ENCODE measurements at regions of chr12 and their contacts with region 1.

Region 1: GRCh38 chr12:127677537-127678131 is 589.3 kb upstream of the TMEM132C start:
- DNase-seq: peak; percentile 81 to 87
- ATAC-seq: peak; percentile 83
- H3K4me3 ChIP-seq: no peak overlapping the region
- H3K27ac ChIP-seq: no peak overlapping the region
- H3K4me1 ChIP-seq: no peaks in the 10 kb centered on the region
- H3K27me3 ChIP-seq: no peaks in the 10 kb centered on the region

Region 2: GRCh38 chr12:127108360-127109215 is 569.0 kb before region 1 on chr12:
- intact Hi-C with region 1: loop called (anchors 5 kb)
- DNase-seq: peak in 1 of 2 donors; percentile 61
- ATAC-seq: peak; percentile 67
- H3K4me3 ChIP-seq: no peak overlapping the region
- H3K27ac ChIP-seq: no peak overlapping the region
- H3K4me1 ChIP-seq: no peaks in the 10 kb centered on the region
- H3K27me3 ChIP-seq: no peaks in the 10 kb centered on the region

Region 3: DNA sequence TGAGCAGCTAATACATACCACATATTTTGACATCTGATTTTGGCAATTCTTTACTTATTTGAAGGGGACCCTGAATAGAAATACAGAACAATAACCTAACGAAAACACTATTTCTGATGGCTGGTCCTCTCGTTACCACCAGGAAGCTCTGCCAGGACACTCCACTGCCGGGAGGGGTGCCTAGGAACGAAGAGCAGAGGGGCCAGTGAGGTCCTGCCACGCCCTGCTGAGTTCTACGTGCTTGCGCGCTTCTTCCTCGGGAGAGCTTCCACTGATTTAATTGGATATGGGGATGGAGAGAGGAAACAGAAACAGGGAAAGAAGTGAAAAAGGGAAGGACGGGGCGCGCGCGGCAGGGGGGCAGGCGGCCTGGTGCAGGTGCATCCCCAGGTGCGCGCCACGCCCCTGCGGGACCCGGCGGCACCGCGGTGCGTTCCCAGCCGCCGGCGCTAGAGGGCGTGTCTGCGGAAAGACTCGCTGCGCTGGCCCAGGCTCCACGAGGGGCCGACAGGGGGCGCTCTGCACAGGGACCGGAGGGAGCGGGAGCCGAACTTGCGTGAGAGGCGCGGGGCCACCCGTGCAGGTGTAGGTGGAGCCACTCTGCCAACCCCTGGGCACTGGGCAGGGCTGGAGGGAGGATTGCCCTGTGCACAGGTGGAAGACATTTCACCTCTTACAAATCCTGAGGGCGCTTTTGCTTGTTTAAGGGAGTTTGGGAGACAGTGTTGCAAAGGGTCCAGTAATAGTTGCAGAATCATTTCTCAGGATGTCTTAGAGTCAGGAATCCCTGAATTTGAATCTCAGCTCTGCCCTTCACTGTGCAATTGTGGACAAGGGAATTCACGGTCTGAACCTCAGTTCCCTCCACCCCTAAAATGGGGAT is 397.0 kb before region 1 on chr12:
- intact Hi-C with region 1: loop called (anchors 5 to 10 kb)
- DNase-seq: peak; percentile 59 to 86
- ATAC-seq: peak; percentile 21
- H3K4me3 ChIP-seq: no peak overlapping the region
- H3K27ac ChIP-seq: no peak overlapping the region
- H3K4me1 ChIP-seq: no peaks in the 10 kb centered on the region
- H3K27me3 ChIP-seq: no peaks in the 10 kb centered on the region

Region 4: DNA sequence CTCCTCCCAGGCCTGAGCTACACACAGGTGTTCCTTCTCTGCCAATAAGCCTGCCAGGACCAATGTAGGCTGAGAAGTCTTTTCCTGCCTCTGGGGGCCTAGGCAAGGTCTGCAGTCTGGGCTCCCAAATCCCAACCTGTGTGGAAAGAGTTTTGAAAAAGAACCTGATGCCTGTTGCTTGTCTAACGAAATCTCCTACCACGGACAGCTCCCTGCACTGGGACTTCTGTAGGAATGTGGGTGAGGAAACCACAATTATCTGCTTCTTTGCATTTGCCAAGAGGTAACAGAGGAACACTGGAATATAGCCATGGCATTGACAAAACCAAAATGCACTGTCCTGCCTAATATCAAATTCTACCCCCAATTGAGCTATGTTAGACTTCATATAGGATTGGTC is 287.7 kb before region 1 on chr12:
- intact Hi-C with region 1: loop called in 1 of 2 experiments (anchors 5 kb)
- DNase-seq: no peak
- ATAC-seq: no peak
- H3K4me3 ChIP-seq: no peak overlapping the region
- H3K27ac ChIP-seq: no peak overlapping the region
- H3K4me1 ChIP-seq: no peaks in the 10 kb centered on the region
- H3K27me3 ChIP-seq: no peaks in the 10 kb centered on the region

Region 5: GRCh38 chr12:127445581-127446139 is 232.0 kb before region 1 on chr12:
- intact Hi-C with region 1: loop called in 1 of 2 experiments (anchors 10 kb)
- DNase-seq: no peak
- ATAC-seq: no peak
- H3K4me3 ChIP-seq: no peak overlapping the region
- H3K27ac ChIP-seq: peak overlapping the region in 1 of 2 donors; percentile 62
- H3K4me1 ChIP-seq: peaks cover 0 to 2% of the 10 kb centered on the region in 2 donors
- H3K27me3 ChIP-seq: no peaks in the 10 kb centered on the region

Region 6: DNA sequence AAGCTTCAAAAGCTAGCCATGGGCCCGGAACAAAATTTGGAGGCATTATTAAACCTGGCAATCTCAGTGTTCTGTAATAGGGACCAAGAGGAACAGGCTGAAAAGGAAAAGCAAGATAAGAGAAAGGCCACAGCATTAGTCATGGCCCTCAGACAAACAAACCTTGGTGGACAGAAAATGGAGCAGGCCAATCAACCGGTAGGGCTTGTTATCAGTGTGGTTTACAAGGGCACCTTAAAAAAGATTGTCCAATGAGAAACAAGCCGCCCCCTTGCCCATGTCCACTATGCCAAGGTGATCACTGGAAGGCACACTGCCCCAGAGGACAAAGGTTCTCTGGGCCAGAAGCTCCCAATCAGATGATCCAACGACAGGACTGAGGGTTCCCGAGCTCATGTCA is 64.6 kb before region 1 on chr12:
- intact Hi-C with region 1: no loop called
- DNase-seq: no peak
- ATAC-seq: no peak
- H3K4me3 ChIP-seq: no peak overlapping the region
- H3K27ac ChIP-seq: peak overlapping the region; percentile 18 to 65
- H3K4me1 ChIP-seq: peaks cover 6 to 11% of the 10 kb centered on the region in 2 donors
- H3K27me3 ChIP-seq: no peaks in the 10 kb centered on the region

Region 7: DNA sequence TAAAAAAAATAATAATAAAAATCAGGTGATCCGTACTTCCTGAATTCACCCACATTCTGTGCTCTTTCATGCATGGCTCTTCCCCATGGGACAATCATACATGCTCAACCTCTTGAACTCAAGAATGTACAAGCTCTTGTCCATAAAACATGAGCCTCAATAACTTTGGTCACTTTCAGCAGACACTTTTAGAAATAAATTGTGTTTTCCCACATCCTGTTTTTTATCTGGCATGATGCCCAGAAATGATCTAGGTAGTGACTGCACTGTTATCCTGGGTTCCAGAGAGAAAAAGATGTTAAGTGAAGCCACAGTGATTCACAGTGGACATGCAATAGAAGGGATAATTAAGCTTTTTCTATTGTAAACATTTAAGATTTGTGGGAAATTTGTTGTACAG is 51.7 kb after region 1 on chr12:
- intact Hi-C with region 1: no loop called
- DNase-seq: no peak
- ATAC-seq: no peak
- H3K4me3 ChIP-seq: no peak overlapping the region
- H3K27ac ChIP-seq: no peak overlapping the region
- H3K4me1 ChIP-seq: no peaks in the 10 kb centered on the region
- H3K27me3 ChIP-seq: no peaks in the 10 kb centered on the region

Region 8: DNA sequence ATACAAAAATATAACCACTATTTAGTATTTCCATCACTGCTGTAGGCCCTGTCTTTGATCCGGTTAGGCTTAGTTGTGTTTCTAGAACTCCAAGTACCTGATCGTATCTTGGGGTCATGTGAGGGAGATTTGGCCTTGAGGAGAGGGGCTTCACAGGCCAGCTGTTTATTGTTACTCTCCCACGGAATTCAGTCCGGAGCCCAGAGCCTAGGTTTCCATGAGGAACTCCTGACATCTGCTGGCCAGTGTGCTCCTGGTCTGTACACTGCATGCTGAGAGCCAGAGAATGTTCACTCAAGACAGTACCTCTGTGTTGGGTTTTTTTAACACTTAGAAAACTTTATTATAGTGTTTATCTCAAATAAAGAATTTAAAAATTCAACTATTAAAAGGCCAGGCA is 248.3 kb after region 1 on chr12:
- intact Hi-C with region 1: loop called in 1 of 2 experiments (anchors 5 kb)
- DNase-seq: peak in 1 of 2 donors; percentile 55
- ATAC-seq: no peak
- H3K4me3 ChIP-seq: no peak overlapping the region
- H3K27ac ChIP-seq: no peak overlapping the region
- H3K4me1 ChIP-seq: peaks cover 2 to 13% of the 10 kb centered on the region in 2 donors
- H3K27me3 ChIP-seq: no peaks in the 10 kb centered on the region

Region 9: GRCh38 chr12:128059621-128060370 is 382.2 kb after region 1 on chr12:
- intact Hi-C with region 1: loop called in 1 of 2 experiments (anchors 5 kb)
- DNase-seq: no peak
- ATAC-seq: no peak
- H3K4me3 ChIP-seq: no peak overlapping the region
- H3K27ac ChIP-seq: no peak overlapping the region
- H3K4me1 ChIP-seq: no peaks in the 10 kb centered on the region
- H3K27me3 ChIP-seq: no peaks in the 10 kb centered on the region

Measured in aorta (tissue), 5 donors.